Motor neuron (in vitro differentiated cells): ENCODE measurements at regions of chr11 and their contacts with region 1.

Region 1: GRCh38 chr11:57249384-57250319 is 12.6 kb upstream of the APLNR start:
- ATAC-seq: peak; percentile 47 to 75 (median 71)
- H3K4me3 ChIP-seq: no peak overlapping the region
- H3K27ac ChIP-seq: no peak overlapping the region
- H3K4me1 ChIP-seq: peaks cover 0 to 5% of the 10 kb centered on the region in 2 donors

Region 2: GRCh38 chr11:55942785-55943392 is 1306.8 kb before region 1 on chr11:
- in situ Hi-C with region 1: loop called in 1 of 9 experiments (anchors 25 kb)
- ATAC-seq: peak in 4 of 8 experiments; percentile 27 to 60 (median 53)
- H3K4me3 ChIP-seq: no peak overlapping the region
- H3K27ac ChIP-seq: no peak overlapping the region
- H3K4me1 ChIP-seq: no peaks in the 10 kb centered on the region

Region 3: DNA sequence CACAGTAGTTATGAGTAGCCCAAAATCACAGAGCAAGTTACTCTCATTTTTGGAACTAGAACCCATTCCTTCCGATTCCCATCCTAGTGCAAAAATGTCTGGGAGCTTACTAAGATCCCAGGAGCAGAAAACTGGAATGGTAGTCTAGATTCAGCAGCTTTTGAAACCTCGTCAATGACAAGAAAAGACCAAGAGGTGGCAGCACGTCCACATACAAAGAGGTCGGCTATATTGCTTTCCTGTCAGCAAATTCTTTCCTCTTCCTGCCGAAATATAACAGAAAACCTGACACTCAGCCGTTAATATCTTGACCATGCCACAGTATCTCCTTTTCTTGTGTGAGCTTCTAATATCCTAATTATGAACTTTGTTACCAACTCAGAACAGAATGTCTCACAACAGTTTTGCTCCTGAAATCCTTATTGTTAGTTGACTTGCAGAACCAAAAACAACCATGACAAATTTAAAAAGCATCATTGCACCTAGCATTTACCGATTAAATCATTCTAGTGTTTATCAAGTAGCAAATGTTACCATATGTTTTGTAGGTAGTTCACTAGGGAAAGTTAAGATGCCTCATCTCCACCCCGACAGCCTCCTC is 408.3 kb before region 1 on chr11:
- in situ Hi-C with region 1: loop called in 7 of 9 experiments (anchors 10 to 25 kb)
- ATAC-seq: peak; percentile 40 to 73 (median 60)
- H3K4me3 ChIP-seq: no peak overlapping the region
- H3K27ac ChIP-seq: no peak overlapping the region
- H3K4me1 ChIP-seq: peaks cover 0 to under 1% of the 10 kb centered on the region in 2 donors

Region 4: DNA sequence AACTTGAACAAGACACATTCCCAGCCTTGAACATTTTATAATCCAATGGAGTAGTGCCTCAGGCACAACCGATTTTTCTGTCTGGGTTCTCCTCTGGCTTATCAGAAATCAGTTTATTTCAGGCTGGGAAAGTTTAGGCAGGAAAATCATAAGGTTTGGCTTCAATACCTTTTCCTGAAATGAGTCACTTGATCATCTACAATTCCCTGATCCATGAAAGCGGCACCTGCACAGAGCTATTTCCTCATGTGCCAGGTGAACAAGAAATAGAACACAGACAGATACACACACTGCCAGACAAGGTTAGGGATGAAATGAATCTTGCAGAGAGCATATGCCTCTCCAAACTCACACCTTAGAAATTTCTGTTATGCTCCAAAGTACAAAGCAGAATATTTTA is 394.4 kb before region 1 on chr11:
- in situ Hi-C with region 1: loop called in 1 of 9 experiments (anchors 25 kb)
- ATAC-seq: no peak
- H3K4me3 ChIP-seq: no peak overlapping the region
- H3K27ac ChIP-seq: no peak overlapping the region
- H3K4me1 ChIP-seq: no peaks in the 10 kb centered on the region

Region 5: DNA sequence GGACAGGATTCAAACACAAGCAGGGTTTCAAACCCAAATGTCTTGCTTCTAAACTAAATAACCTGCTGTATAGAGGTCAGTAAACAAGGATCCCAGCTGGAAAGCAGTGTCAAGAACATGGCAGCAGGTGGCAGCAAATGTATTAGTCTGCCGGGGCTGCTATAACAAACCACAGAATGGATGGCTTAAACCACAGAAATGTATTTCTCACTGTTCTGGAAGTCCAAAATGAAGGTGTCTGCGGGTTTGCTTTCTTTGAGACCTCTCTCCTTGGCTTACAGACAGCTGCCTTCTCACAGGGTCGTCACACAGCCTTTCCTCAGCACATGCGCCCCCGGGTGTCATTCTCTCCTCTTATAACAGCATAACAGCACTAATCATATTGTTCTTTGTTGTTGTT is 133.0 kb before region 1 on chr11:
- in situ Hi-C with region 1: loop called in 3 of 9 experiments (anchors 10 kb)
- ATAC-seq: peak in 3 of 8 experiments; percentile 82 to 90 (median 83)
- H3K4me3 ChIP-seq: no peak overlapping the region
- H3K27ac ChIP-seq: no peak overlapping the region
- H3K4me1 ChIP-seq: no peaks in the 10 kb centered on the region

Region 6: GRCh38 chr11:57124917-57125316 is 124.7 kb before region 1 on chr11:
- in situ Hi-C with region 1: loop called in 6 of 9 experiments (anchors 10 to 25 kb)
- ATAC-seq: no peak
- H3K4me3 ChIP-seq: no peak overlapping the region
- H3K27ac ChIP-seq: no peak overlapping the region
- H3K4me1 ChIP-seq: peaks cover 3 to 4% of the 10 kb centered on the region in 2 donors

Region 7: GRCh38 chr11:57131080-57131790 is 118.4 kb before region 1 on chr11:
- in situ Hi-C with region 1: loop called in 6 of 9 experiments (anchors 10 to 25 kb)
- ATAC-seq: peak; percentile 43 to 88 (median 72)
- H3K4me3 ChIP-seq: no peak overlapping the region
- H3K27ac ChIP-seq: no peak overlapping the region
- H3K4me1 ChIP-seq: peaks cover 4 to 11% of the 10 kb centered on the region in 2 donors